ENCODE measurements at regions of chr22 and their contacts with region 1.

Region 1: GRCh38 chr22:19479357-19480172 is at the start of gene CDC45:
- DNase-seq: peak; percentile 96
- ATAC-seq: peak; percentile 94
- H3K4me3 ChIP-seq: peak within 1 kb of the TSS; percentile 80 to 91
- H3K27ac ChIP-seq: peak within 1 kb of the TSS; percentile 86
- H3K4me1 ChIP-seq: peaks cover 14 to 23% of the 10 kb centered on the region in 2 experiments; a peak in 3 of 4 replicates
- H3K27me3 ChIP-seq: no peaks in the 10 kb centered on the region
- CTCF ChIP-seq: no peak
- POLR2A ChIP-seq: no peak
- RAD21 ChIP-seq: no peak
- total RNA-seq, gene CDC45: 43.4 TPM

Region 2: DNA sequence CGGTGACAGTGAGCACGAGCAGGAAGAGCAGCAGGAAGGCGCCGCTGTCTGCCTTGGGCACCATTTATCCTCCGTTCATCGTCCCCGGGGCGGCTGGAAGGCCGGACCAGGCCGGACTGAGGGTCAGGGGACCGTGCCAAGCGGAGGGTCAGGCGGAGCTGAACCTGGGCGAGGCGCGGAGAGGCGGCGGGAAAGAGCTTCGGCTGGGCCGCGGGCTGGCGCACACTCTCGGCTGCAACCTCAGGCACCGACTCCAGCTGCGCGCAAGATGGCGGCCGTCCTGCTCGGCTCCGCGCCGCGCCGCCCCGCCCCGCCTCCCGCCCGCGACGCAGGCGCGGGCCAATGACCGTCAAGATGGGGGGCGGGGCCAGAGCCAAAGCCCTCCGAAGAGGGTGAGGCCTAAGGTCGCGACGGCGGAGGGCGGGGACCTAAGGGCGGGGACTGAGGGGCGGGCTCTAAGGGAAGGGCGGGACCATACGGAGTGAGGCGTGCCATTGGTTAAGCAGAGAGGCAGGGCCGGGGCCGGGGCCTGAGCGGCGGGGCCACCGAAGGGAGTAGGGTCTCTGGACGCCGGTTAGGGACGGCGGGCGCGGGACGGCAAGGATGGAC is 357.3 kb before region 1 on chr22 and contains the start of gene DGCR2:
- CTCF ChIA-PET with region 1: no interaction called
- POLR2A ChIA-PET with region 1: no interaction called
- RAD21 ChIA-PET with region 1: no interaction called
- intact Hi-C with region 1: loop called (anchors 5 kb)
- DNase-seq: peak; percentile 89
- ATAC-seq: peak; percentile 96
- H3K4me3 ChIP-seq: peak within 1 kb of the TSS; percentile 86 to 95
- H3K27ac ChIP-seq: peak within 1 kb of the TSS; percentile 76
- H3K4me1 ChIP-seq: peaks cover 10 to 23% of the 10 kb centered on the region in 2 experiments
- H3K27me3 ChIP-seq: no peaks in the 10 kb centered on the region
- CTCF ChIP-seq: no peak
- POLR2A ChIP-seq: peak; percentile 37
- RAD21 ChIP-seq: no peak
- total RNA-seq, gene DGCR2: 42.9 TPM

Region 3: GRCh38 chr22:19143967-19144400 is 335.6 kb before region 1 on chr22:
- CTCF ChIA-PET with region 1: no interaction called
- POLR2A ChIA-PET with region 1: no interaction called
- RAD21 ChIA-PET with region 1: interaction called in 1 of 2 experiments, 3 read pairs
- intact Hi-C with region 1: loop called (anchors 10 kb)
- DNase-seq: no peak
- ATAC-seq: peak; percentile 48
- H3K4me3 ChIP-seq: peak overlapping the region; percentile 90 to 97
- H3K27ac ChIP-seq: peak overlapping the region; percentile 48
- H3K4me1 ChIP-seq: peaks cover 3 to 11% of the 10 kb centered on the region in 2 experiments
- H3K27me3 ChIP-seq: no peaks in the 10 kb centered on the region
- CTCF ChIP-seq: no peak
- POLR2A ChIP-seq: no peak
- RAD21 ChIP-seq: no peak

Region 4: DNA sequence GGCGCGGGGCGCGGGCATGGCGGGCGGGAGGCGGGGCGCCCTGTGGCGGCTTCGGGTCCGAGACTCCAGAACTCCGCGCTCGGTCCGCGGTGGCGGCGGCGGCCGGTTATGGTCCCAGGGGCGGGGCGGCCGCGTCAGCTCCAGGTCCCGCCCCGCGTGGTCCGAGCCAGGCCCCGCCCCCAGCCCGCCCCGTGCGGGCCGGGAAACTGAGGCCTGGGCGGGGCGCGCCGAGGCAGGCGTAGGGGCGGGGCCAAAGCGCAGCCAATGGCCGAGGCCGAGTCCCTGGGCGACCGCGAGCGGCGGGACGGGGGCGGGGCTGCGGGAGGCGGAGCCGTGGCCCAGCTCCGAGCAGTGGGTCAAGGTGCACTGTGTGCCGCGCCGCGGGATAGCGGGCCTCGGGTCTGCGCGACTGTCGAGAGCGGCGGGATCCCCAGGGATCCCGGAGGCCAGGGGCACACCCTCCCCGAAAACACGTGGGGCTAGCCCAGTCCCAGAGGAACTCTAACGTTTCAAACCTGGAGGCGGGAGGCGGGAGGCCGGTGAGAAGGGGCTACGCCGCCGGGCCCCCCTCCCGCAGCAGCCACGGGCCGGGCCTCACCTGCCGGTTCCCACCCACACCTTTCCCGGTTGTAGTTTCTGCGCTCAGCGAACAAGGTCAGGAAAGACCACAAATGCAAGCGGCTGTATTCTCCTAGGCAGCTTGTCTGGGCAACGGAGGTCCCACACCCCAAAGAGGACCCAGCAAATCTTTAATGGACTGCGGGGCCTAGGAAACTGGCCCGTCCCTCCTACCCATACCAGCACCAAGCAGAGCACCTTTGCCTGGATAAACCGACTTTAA is 300.7 kb before region 1 on chr22 and contains the start of gene SLC25A1:
- CTCF ChIA-PET with region 1: interaction called, 11 read pairs
- POLR2A ChIA-PET with region 1: no interaction called
- RAD21 ChIA-PET with region 1: no interaction called
- intact Hi-C with region 1: loop called (anchors 1 kb)
- DNase-seq: peak; percentile 63
- ATAC-seq: peak; percentile 82
- H3K4me3 ChIP-seq: peak within 1 kb of the TSS; percentile 67 to 82
- H3K27ac ChIP-seq: peak within 1 kb of the TSS; percentile 94
- H3K4me1 ChIP-seq: peaks cover 7 to 49% of the 10 kb centered on the region in 2 experiments
- H3K27me3 ChIP-seq: no peaks in the 10 kb centered on the region
- CTCF ChIP-seq: no peak
- POLR2A ChIP-seq: peak; percentile 32
- RAD21 ChIP-seq: no peak
- total RNA-seq, gene SLC25A1: 146 TPM

Region 5: GRCh38 chr22:19291580-19292457 is 187.7 kb before region 1 on chr22 and contains the start of gene CLTCL1:
- CTCF ChIA-PET with region 1: no interaction called
- POLR2A ChIA-PET with region 1: no interaction called
- RAD21 ChIA-PET with region 1: no interaction called
- intact Hi-C with region 1: loop called (anchors 5 kb)
- DNase-seq: peak; percentile 38
- ATAC-seq: peak; percentile 87
- H3K4me3 ChIP-seq: peak within 1 kb of the TSS; percentile 65 to 75
- H3K27ac ChIP-seq: peak within 1 kb of the TSS; percentile 63; the same call in 1 of the 2 replicates
- H3K4me1 ChIP-seq: peaks cover 9 to 21% of the 10 kb centered on the region in 2 experiments
- H3K27me3 ChIP-seq: no peaks in the 10 kb centered on the region
- CTCF ChIP-seq: no peak
- POLR2A ChIP-seq: peak; percentile 66
- RAD21 ChIP-seq: no peak
- total RNA-seq, gene CLTCL1: 7.1 TPM

Region 6: DNA sequence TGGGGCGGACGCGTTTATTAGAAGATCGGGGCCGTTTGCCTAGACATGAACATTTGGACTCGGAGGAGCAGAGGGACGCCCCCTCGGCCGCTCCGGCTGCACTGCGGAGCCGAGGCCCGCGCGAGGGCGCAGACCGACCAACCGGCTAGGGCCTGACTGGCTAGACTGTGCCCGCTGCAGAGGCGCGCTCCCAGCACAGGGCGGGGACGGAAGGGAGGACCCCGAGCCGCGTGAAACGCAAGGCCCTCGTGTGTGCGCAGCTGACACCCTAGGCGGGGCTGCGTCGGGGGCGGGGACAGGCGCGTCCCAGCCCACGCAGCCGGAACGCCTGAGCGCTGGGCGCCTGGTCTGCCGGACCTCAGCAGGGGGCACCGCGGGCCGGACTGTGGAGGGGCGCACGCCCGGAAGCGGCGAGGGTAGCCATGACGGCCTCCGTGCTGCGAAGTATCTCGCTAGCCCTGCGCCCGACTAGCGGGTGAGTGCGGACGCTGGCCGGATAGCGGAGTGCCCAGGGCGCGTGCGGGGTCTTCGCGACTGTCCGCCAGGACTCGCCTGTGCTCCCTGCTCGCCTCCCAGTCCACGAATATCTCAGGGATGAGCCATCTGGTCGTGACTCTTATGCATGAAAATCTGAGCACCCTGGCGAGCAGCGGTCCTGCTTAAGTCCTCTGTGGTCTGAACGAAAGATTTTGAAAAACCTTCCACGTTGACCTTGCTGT is 47.3 kb before region 1 on chr22 and contains the start of gene MRPL40:
- CTCF ChIA-PET with region 1: no interaction called
- POLR2A ChIA-PET with region 1: no interaction called
- RAD21 ChIA-PET with region 1: no interaction called
- intact Hi-C with region 1: loop called (anchors 1 kb)
- DNase-seq: peak; percentile 85
- ATAC-seq: peak; percentile 89
- H3K4me3 ChIP-seq: peak within 1 kb of the TSS; percentile 92 to 94
- H3K27ac ChIP-seq: peak within 1 kb of the TSS; percentile 98
- H3K4me1 ChIP-seq: peaks cover 16 to 17% of the 10 kb centered on the region in 2 experiments
- H3K27me3 ChIP-seq: no peaks in the 10 kb centered on the region
- CTCF ChIP-seq: no peak
- POLR2A ChIP-seq: peak; percentile 97
- RAD21 ChIP-seq: no peak
- total RNA-seq, gene MRPL40: 40.1 TPM

Region 7: DNA sequence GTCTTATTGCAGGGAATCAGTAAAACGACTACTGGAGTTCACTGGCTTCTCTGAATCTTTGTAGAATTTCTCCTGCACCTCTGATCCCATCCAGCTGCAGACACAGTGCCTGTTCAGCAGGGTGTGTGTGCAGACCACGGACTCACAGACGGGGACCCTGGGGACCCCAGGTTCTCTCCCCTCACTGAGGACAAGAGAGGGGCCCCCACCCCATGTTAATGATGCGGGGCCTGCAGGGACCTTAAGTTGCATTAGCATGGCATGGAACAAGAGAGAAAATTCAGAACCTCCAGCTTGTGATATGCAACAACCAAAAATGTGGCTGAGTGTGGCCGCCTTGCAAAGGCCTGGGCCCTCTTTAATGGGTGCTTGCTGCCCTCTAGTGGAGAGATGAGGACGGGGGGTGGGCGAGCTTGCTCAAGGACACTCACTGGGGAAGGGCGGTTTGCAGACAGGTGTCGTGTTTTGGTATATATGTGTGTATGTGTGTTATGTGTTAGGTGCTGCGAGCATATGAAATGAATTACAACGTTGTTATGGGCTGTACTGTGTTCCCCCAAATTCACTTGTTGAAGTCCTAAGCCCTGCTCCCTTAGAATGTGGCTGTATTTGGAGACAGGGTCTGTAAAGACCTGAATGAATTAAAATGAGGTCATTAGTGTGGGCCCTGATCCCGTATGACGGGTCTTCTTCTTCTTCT is 150.3 kb after region 1 on chr22:
- CTCF ChIA-PET with region 1: interaction called, 5 read pairs
- POLR2A ChIA-PET with region 1: interaction called, 3 read pairs
- RAD21 ChIA-PET with region 1: interaction called in 1 of 2 experiments, 3 read pairs
- intact Hi-C with region 1: loop called (anchors 5 kb)
- DNase-seq: peak; percentile 68
- ATAC-seq: peak; percentile 93
- H3K4me3 ChIP-seq: no peak overlapping the region
- H3K27ac ChIP-seq: no peak overlapping the region
- H3K4me1 ChIP-seq: peaks cover 4 to 6% of the 10 kb centered on the region in 2 experiments; a peak in 2 of 4 replicates
- H3K27me3 ChIP-seq: no peaks in the 10 kb centered on the region
- CTCF ChIP-seq: peak; percentile 83 to 97 (median 95)
- POLR2A ChIP-seq: no peak
- RAD21 ChIP-seq: peak; percentile 92

Region 8: DNA sequence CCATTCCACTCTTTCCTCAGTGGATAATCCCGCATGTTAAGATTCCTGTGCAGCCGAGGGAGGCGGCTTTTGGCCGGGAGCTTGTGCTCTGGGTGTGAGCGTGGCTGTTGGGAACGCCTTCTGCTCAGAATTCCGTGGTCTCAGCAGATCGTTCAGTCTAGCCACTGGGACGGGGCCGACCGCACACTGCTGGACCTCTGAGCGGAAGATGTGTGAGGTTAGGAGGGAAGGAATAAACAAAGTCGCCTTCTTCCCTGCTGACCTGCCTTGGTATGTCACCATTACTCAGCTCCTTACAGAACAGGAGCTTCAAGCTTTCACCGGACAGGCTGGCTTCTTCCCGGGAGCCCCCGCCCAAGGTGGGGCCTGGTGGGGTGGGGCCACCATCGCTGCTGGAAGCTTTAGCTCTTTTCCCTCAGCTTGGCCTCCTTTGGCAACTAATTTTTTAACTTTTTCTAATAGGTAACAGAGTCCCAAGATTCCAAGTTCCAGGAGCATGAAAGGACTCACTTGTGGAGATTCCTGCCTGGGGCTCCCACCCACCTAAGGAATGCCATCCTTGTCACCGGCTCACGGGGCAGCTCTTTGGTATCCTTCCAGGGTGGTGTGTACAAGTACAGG is 212.3 kb after region 1 on chr22:
- CTCF ChIA-PET with region 1: no interaction called
- POLR2A ChIA-PET with region 1: no interaction called
- RAD21 ChIA-PET with region 1: no interaction called
- intact Hi-C with region 1: no loop called
- DNase-seq: peak; percentile 40
- ATAC-seq: peak; percentile 83
- H3K4me3 ChIP-seq: peak overlapping the region; percentile 36 to 53
- H3K27ac ChIP-seq: peak overlapping the region; percentile 55
- H3K4me1 ChIP-seq: peaks cover 9 to 20% of the 10 kb centered on the region in 2 experiments
- H3K27me3 ChIP-seq: no peaks in the 10 kb centered on the region
- CTCF ChIP-seq: no peak
- POLR2A ChIP-seq: no peak
- RAD21 ChIP-seq: no peak